MCF 10A (cell line): ENCODE measurements at regions of chr6 and their contacts with region 1.

Region 1: GRCh38 chr6:14066782-14067406 is 50.7 kb upstream of the CD83 start:
- DNase-seq: peak; percentile 82
- H3K4me3 Mint-ChIP-seq: no peak overlapping the region
- H3K27ac Mint-ChIP-seq: no peak overlapping the region
- H3K4me1 Mint-ChIP-seq: peaks cover 17% of the 10 kb centered on the region
- H3K27me3 Mint-ChIP-seq: no peaks in the 10 kb centered on the region
- CTCF ChIP-seq: peak; percentile 44

Region 2: GRCh38 chr6:12761381-12762120 is 1305.3 kb before region 1 on chr6:
- CTCF ChIA-PET with region 1: no interaction called
- POLR2A ChIA-PET with region 1: no interaction called
- intact Hi-C with region 1: no loop called
- DNase-seq: peak; percentile 2
- H3K4me3 Mint-ChIP-seq: no peak overlapping the region
- H3K27ac Mint-ChIP-seq: no peak overlapping the region
- H3K4me1 Mint-ChIP-seq: no peaks in the 10 kb centered on the region
- H3K27me3 Mint-ChIP-seq: peaks cover 59% of the 10 kb centered on the region
- CTCF ChIP-seq: no peak

Region 3: GRCh38 chr6:13795041-13795750 is 271.7 kb before region 1 on chr6:
- CTCF ChIA-PET with region 1: interaction called, 16 read pairs
- POLR2A ChIA-PET with region 1: no interaction called
- intact Hi-C with region 1: loop called (anchors 1 kb)
- DNase-seq: peak; percentile 87
- H3K4me3 Mint-ChIP-seq: no peak overlapping the region
- H3K27ac Mint-ChIP-seq: no peak overlapping the region
- H3K4me1 Mint-ChIP-seq: peaks cover 5% of the 10 kb centered on the region
- H3K27me3 Mint-ChIP-seq: no peaks in the 10 kb centered on the region
- CTCF ChIP-seq: peak; percentile 83

Region 4: DNA sequence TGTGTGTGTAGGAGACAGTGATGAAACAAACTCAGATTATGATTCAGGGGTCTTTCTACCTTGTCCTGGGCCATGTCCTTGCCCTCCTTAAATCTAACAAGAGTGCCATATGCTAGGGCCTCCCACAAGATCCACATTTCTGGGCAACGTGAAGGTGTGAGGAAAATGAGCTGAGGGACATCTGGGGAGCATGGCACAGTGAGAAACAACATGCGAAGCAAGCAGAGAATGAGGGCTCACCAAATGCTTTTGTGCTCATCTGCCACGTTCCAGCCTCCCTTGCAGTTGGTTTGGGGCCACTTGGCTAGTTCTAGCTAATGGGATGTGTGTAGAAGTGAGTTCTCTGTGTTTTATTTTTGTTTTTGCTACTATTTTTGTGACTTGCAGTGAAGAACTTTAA is 163.5 kb before region 1 on chr6:
- CTCF ChIA-PET with region 1: interaction called, 259 read pairs
- POLR2A ChIA-PET with region 1: interaction called, 9 read pairs
- intact Hi-C with region 1: no loop called
- DNase-seq: no peak
- H3K4me3 Mint-ChIP-seq: no peak overlapping the region
- H3K27ac Mint-ChIP-seq: no peak overlapping the region
- H3K4me1 Mint-ChIP-seq: no peaks in the 10 kb centered on the region
- H3K27me3 Mint-ChIP-seq: peaks cover 56% of the 10 kb centered on the region
- CTCF ChIP-seq: no peak

Region 5: GRCh38 chr6:13927203-13927602 is 139.7 kb before region 1 on chr6:
- CTCF ChIA-PET with region 1: interaction called, 10 read pairs
- POLR2A ChIA-PET with region 1: interaction called, 5 read pairs
- intact Hi-C with region 1: no loop called
- DNase-seq: peak; percentile 26
- H3K4me3 Mint-ChIP-seq: no peak overlapping the region
- H3K27ac Mint-ChIP-seq: no peak overlapping the region
- H3K4me1 Mint-ChIP-seq: no peaks in the 10 kb centered on the region
- H3K27me3 Mint-ChIP-seq: peaks cover 69% of the 10 kb centered on the region
- CTCF ChIP-seq: no peak

Region 6: DNA sequence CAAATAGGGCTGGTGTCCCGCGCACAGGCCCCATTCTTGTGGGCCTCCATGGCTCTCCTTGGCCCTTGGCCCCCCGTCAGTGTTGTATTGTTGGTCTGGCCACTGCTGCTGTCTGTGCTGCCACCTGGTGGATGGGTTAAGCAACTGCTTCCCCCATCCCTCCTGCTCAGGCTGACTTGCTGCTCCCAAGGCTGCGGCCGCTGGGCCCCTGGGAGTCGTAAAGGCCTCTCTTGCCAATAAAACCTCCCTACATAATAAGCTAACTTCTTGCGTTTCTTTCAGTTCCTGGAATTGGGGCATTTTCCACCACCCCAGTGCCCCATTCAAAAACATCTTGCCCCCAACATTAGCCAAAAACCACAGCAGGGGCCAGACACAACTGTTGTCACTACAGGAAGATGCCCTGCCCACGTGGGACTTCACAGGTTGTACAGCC is 77.8 kb after region 1 on chr6:
- CTCF ChIA-PET with region 1: interaction called, 18 read pairs
- POLR2A ChIA-PET with region 1: no interaction called
- intact Hi-C with region 1: loop called (anchors 1 kb)
- DNase-seq: peak; percentile 75
- H3K4me3 Mint-ChIP-seq: no peak overlapping the region
- H3K27ac Mint-ChIP-seq: no peak overlapping the region
- H3K4me1 Mint-ChIP-seq: no peaks in the 10 kb centered on the region
- H3K27me3 Mint-ChIP-seq: no peaks in the 10 kb centered on the region
- CTCF ChIP-seq: peak; percentile 92

Region 7: DNA sequence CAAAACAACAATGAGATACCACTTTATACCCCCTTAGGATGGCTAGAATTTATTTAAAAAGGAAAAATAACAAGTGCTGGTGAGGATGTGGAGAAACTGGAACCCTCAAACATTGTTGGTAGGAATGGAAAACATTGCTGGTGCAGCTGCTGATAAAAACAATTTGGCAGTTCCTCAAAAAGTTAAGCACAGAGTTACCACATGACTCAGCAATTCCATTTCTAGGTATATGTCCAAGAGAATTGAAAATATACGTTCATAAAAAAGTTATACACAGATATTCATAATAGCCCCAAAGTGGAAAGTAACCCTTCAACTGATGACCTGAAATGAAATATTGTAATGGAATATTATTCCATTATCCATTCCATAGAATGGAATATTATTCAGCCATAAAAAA is 105.7 kb after region 1 on chr6:
- CTCF ChIA-PET with region 1: no interaction called
- POLR2A ChIA-PET with region 1: no interaction called
- intact Hi-C with region 1: no loop called
- DNase-seq: no peak
- H3K4me3 Mint-ChIP-seq: no peak overlapping the region
- H3K27ac Mint-ChIP-seq: no peak overlapping the region
- H3K4me1 Mint-ChIP-seq: no peaks in the 10 kb centered on the region
- H3K27me3 Mint-ChIP-seq: peaks cover 14% of the 10 kb centered on the region
- CTCF ChIP-seq: no peak

Region 8: GRCh38 chr6:14932485-14933155 is 865.7 kb after region 1 on chr6:
- CTCF ChIA-PET with region 1: no interaction called
- POLR2A ChIA-PET with region 1: no interaction called
- intact Hi-C with region 1: no loop called
- DNase-seq: no peak
- H3K4me3 Mint-ChIP-seq: no peak overlapping the region
- H3K27ac Mint-ChIP-seq: no peak overlapping the region
- H3K4me1 Mint-ChIP-seq: peaks cover 10% of the 10 kb centered on the region
- H3K27me3 Mint-ChIP-seq: no peaks in the 10 kb centered on the region
- CTCF ChIP-seq: no peak